ENCODE measurements at regions of chr15 and their contacts with region 1.

Region 1: DNA sequence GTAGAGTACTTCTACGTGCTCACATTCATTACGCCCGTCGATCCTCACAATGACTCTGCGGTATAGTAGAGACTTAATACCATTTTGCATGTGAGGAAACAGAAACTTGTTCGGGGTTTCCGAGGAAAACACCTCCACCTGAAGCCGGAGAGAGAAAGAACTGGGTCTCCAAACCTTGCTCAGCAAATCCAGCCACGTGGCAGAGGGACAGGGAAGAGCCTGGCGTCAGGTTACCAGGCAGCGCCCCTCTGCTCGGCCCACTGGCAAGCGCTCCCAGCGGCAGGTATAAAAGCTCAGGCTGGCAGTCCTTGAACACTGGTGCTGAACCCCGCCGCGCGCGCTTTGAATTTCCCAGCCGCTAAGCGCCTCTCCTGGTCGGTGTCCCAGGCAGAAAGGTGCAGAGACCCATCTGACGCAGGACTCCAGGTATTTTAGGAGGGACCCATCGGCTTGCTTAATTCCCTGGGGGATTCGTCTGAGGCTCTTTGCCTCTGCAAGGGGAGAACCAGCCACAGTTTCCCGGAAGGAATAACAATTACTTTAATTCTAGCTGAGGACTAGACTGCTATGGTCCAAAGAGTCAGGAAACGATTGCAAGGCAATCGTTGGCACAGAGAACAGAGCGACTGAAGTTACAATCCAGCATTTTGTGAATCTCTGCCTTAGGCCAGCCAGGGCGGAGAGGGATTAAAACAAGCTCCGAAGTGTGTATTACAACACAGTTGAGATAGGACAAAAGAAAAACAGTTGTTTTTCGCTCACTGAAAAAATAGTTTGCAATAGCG is at the start of gene C2CD4A:
- DNase-seq: peak; percentile 29
- H3K4me3 Mint-ChIP-seq: peak within 1 kb of the TSS; percentile 76
- H3K27ac Mint-ChIP-seq: peak within 1 kb of the TSS; percentile 24
- H3K4me1 Mint-ChIP-seq: peaks cover 19% of the 10 kb centered on the region
- H3K27me3 Mint-ChIP-seq: peaks cover 61% of the 10 kb centered on the region
- total RNA-seq, gene C2CD4A: not detected in 2 replicates

Region 2: DNA sequence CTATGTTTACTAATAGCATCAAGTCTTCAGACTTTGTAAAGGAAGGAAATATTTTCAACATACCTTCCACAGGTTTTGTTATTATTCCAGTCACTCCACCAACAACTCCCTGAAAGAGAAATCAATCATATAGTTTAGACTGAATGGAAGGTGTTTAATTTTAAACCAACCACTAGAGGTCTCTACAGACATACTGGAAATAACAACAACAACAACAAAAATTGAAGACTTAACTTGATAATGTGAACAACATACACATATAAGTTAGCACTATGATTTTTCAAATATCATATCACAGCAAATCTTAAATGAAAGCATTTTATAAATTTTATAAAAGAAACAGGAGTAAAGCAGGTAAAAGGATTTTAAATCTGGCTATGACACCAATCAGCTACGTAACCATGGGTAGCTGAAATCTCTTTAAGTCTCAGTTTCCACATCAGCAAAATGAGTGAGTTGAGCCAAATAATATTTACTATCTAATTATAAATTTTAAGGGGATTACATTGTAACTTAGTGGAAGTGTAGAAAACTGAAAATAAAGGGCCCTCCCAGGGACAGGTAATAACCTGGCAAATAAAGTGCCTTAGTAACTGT is 194.8 kb before region 1 on chr15:
- intact Hi-C with region 1: loop called (anchors 2 kb)
- DNase-seq: no peak
- H3K4me3 Mint-ChIP-seq: no peak overlapping the region
- H3K27ac Mint-ChIP-seq: no peak overlapping the region
- H3K4me1 Mint-ChIP-seq: no peaks in the 10 kb centered on the region
- H3K27me3 Mint-ChIP-seq: no peaks in the 10 kb centered on the region

Region 3: DNA sequence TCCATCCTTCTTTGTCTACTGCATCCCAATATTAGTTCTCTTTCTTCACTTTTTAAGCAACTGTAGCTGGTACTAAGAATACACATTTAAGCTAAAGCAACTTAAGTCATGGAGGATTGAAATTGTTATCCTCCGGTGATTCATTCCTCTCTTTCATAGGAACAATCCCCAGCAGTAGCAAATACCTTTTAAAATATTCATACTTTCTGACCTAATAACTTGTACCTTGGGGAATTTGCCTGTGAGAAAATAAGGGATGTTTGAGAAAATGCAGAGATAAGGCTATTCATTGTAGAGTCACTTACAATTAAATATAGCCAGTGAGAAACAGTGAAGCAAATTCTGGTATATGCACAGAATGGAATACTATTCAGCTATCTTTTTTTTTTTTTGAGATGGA is 72.6 kb before region 1 on chr15:
- intact Hi-C with region 1: no loop called
- DNase-seq: no peak
- H3K4me3 Mint-ChIP-seq: no peak overlapping the region
- H3K27ac Mint-ChIP-seq: no peak overlapping the region
- H3K4me1 Mint-ChIP-seq: peaks cover 13% of the 10 kb centered on the region
- H3K27me3 Mint-ChIP-seq: no peaks in the 10 kb centered on the region

Region 4: DNA sequence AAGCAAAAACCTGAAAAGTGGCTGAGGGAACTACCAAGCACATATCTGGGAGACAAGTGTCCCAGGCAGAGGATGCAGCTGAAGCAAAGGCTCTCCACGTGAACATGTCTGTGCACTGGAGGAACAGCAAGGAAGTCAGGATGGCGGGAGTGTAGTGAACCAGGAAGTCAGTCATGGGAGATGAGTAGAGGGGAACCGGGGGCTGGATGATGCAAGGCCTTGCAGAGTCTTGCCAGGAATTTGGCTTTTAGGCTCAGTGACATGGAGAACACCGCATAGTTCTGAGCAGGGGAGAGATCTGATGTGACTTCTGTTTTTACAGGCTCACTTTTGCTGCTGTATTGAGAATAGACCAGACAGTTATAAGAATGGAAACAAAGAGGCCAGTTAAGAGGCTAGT is 18.9 kb after region 1 on chr15:
- intact Hi-C with region 1: no loop called
- DNase-seq: no peak
- H3K4me3 Mint-ChIP-seq: no peak overlapping the region
- H3K27ac Mint-ChIP-seq: no peak overlapping the region
- H3K4me1 Mint-ChIP-seq: no peaks in the 10 kb centered on the region
- H3K27me3 Mint-ChIP-seq: peaks cover 5% of the 10 kb centered on the region

Region 5: DNA sequence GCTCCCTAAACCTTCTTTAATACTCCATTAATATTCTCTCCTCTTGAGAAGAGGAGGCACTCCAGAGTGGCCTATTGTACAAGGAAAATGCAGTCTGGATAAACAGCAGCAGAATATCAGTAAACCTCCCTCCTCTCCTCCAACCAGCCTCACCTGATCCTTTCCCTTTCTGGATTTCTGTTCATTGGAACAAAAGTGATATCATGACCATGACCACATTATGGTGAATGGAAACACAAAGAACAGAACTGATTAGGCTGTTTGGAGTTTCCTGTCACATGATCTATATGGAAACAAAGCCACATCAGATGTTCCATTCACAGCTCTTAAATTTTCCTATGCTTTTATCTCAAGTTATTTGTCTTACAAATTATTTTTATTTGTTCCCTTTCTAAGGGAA is 83.6 kb after region 1 on chr15:
- intact Hi-C with region 1: loop called (anchors 5 kb)
- DNase-seq: no peak
- H3K4me3 Mint-ChIP-seq: no peak overlapping the region
- H3K27ac Mint-ChIP-seq: peak overlapping the region; percentile 58
- H3K4me1 Mint-ChIP-seq: peaks cover 12% of the 10 kb centered on the region
- H3K27me3 Mint-ChIP-seq: peaks cover 4% of the 10 kb centered on the region

Region 6: GRCh38 chr15:62254137-62254934 is 187.5 kb after region 1 on chr15:
- intact Hi-C with region 1: loop called (anchors 5 kb)
- DNase-seq: peak; percentile 43
- H3K4me3 Mint-ChIP-seq: no peak overlapping the region
- H3K27ac Mint-ChIP-seq: no peak overlapping the region
- H3K4me1 Mint-ChIP-seq: no peaks in the 10 kb centered on the region
- H3K27me3 Mint-ChIP-seq: no peaks in the 10 kb centered on the region

Measured in activated T-helper 2 cell treated with anti-CD3 and anti-CD28 coated beads, Interferon-gamma antibody, Interleukin-2, Interleukin-4, amounts not matched to agents 10 μg/mL and 5 μg/mL and 100 μg/mL, durations not matched to agents 14 hours and 24 hours and 36 hours (primary cell).